Heart right ventricle (tissue), 16 donors: ENCODE measurements at regions of chr10 and their contacts with region 1.

Region 1: DNA sequence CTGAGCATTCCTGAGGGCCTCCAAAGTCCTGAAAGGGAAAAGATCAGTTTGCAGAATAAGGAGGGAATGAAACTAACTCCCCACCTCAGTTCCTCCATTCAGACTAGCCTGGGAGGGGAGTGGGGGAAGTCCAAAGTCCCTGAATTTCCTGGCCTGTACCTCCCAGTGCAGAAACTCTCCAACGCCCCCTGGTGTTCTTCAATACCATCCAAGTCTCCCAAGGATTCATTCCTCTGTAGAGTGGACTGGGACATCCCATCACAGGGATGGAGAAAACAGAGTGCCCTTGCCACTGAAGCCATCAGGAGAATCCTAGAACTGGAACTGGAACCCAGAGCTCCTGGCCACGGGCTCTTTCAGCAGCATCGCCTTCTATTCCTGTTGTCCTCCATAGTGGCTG is 1.6 kb upstream of the COL13A1 start:
- DNase-seq: peak in 1 of 2 donors; percentile 55
- ATAC-seq: peak in 5 of 8 donors; percentile 27 to 69 (median 55)
- H3K4me3 ChIP-seq: no peak overlapping the region
- H3K27ac ChIP-seq: no peak overlapping the region
- H3K4me1 ChIP-seq: peaks cover 2 to 30% (median 16%) of the 10 kb centered on the region in 9 donors
- H3K27me3 ChIP-seq: peaks cover 0 to 43% (median 7%) of the 10 kb centered on the region in 7 donors
- CTCF ChIP-seq: peak in 8 of 9 donors; percentile 44 to 76 (median 69)

Region 2: DNA sequence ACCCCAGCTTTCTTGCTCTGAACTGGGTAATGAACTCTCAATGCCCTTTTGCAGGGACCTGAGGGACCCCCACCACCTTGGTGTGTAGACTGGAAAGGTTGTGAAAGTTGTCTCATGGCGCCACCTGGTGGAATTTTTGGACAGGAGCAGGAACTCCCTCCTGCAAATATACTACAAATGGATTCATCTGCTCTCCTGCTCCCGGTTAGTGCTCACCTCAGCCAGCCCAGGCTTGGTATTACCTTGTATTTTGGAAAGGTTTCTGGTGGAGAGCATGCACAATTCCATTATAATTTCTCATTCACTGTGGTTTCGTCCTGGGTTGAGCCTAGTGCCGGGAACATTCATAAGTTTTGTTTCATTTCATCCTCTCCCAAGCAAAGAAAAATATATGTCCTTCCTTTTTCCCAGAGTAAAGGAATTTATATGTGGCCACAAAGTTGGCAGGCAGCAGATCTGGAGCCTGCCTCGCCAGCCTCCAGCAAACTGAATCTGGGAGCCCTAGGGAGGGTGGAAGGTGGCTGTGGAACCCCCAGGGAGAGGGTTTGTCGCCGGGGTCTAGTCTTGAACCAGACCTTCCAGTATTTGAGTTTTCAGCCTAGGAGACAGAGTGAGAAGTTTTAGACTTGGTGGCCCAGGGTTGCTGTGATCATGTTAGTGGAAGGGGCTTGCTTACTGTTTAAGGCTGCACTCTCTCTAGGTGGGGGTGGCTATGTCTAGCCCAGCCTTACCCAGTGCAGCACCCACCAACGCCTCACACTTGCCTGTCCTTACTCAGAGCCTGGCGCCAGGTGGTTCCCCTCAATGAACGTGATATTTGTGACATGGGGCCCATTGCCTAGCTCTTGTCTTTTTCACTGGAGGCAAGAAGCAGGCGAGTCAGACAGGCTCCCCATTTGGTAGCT is 160.6 kb before region 1 on chr10:
- intact Hi-C with region 1: loop called in 5 of 10 experiments (anchors 2 to 10 kb)
- DNase-seq: peak; percentile 36 to 64
- ATAC-seq: peak in 6 of 8 donors; percentile 32 to 75 (median 60)
- H3K4me3 ChIP-seq: no peak overlapping the region
- H3K27ac ChIP-seq: no peak overlapping the region
- H3K4me1 ChIP-seq: no peaks in the 10 kb centered on the region
- H3K27me3 ChIP-seq: peaks cover 0 to 37% (median 12%) of the 10 kb centered on the region in 7 donors
- CTCF ChIP-seq: peak; percentile 75 to 90 (median 87)

Region 3: DNA sequence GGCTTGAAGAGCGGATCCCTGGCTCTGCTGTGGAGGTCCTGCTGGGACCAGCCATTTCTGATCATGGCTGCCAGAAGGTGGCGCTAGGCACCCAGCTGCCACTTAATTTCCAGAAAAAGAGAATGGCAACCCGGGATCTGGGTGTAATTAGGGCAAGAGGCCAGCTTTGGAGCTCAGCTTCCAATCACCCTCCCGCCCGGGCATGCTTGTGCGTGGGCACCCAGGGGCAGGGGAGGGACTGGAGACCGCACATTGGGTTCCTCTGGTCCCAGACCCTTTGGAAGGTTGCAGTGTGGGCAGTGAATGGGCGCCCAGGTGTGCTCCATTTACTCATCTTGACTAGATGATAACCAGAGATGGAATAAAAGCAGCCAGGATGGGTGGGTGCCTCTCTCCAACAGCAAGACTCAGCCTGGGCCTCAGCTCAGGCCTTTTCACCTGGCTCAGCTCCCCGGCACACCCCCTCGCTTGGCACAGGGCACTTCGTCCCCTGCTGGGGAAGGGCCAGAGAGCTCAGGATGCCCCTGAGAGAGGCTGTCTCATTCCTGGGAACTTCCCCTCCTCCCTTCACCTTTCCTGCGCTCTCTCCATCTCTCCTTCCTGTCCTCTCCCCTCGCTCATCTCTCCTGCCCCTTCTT is 155.3 kb before region 1 on chr10:
- intact Hi-C with region 1: loop called in 7 of 10 experiments (anchors 2 to 10 kb)
- DNase-seq: peak; percentile 40 to 57
- ATAC-seq: peak in 6 of 8 donors; percentile 42 to 69 (median 58)
- H3K4me3 ChIP-seq: no peak overlapping the region
- H3K27ac ChIP-seq: no peak overlapping the region
- H3K4me1 ChIP-seq: no peaks in the 10 kb centered on the region
- H3K27me3 ChIP-seq: peaks cover 0 to 41% (median 12%) of the 10 kb centered on the region in 7 donors
- CTCF ChIP-seq: peak; percentile 62 to 90 (median 80)

Region 4: GRCh38 chr10:69696073-69696731 is 103.9 kb before region 1 on chr10:
- intact Hi-C with region 1: loop called in 6 of 10 experiments (anchors 1 to 10 kb)
- DNase-seq: peak in 1 of 2 donors; percentile 12
- ATAC-seq: peak in 6 of 8 donors; percentile 42 to 72 (median 60)
- H3K4me3 ChIP-seq: no peak overlapping the region
- H3K27ac ChIP-seq: no peak overlapping the region
- H3K4me1 ChIP-seq: peaks cover 0 to 5% (median 0%) of the 10 kb centered on the region in 9 donors
- H3K27me3 ChIP-seq: peaks cover 0 to 10% (median 3%) of the 10 kb centered on the region in 7 donors
- CTCF ChIP-seq: peak; percentile 21 to 73 (median 61)

Region 5: GRCh38 chr10:69716711-69717560 is 83.2 kb before region 1 on chr10:
- intact Hi-C with region 1: loop called in 1 of 10 experiments (anchors 5 kb)
- DNase-seq: peak in 1 of 2 donors; percentile 40
- ATAC-seq: peak in 7 of 8 donors; percentile 26 to 64 (median 54)
- H3K4me3 ChIP-seq: no peak overlapping the region
- H3K27ac ChIP-seq: no peak overlapping the region
- H3K4me1 ChIP-seq: peaks cover 0 to 17% (median 6%) of the 10 kb centered on the region in 9 donors
- H3K27me3 ChIP-seq: no peaks in the 10 kb centered on the region
- CTCF ChIP-seq: peak; percentile 27 to 72 (median 66)

Region 6: DNA sequence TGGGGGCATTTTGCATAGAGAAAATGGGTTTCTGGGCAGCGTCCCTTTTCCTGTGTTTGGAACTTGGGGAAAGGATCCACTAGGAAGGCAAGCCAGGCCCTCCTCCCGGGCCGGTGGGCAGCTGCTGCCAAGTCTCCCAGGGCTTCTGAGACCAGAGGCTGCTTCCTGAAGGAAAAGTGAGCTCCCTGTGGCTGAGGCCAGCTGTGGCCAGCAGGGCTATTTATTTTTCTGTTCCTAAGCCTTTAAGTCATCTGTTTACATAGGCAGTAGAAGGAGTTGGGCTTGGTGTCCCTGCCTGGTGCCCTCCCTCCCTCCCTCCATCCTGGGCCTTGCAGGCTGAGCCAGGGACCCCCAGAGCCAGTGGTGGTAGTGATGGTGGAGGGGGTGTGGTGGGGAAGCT is 68.9 kb before region 1 on chr10:
- intact Hi-C with region 1: loop called in 4 of 10 experiments (anchors 5 kb)
- DNase-seq: no peak
- ATAC-seq: peak in 4 of 8 donors; percentile 3 to 23 (median 17)
- H3K4me3 ChIP-seq: no peak overlapping the region
- H3K27ac ChIP-seq: peak overlapping the region in 8 of 10 donors; percentile 80 to 92 (median 83)
- H3K4me1 ChIP-seq: peaks cover 31 to 87% (median 55%) of the 10 kb centered on the region in 9 donors
- H3K27me3 ChIP-seq: no peaks in the 10 kb centered on the region
- CTCF ChIP-seq: no peak

Region 7: DNA sequence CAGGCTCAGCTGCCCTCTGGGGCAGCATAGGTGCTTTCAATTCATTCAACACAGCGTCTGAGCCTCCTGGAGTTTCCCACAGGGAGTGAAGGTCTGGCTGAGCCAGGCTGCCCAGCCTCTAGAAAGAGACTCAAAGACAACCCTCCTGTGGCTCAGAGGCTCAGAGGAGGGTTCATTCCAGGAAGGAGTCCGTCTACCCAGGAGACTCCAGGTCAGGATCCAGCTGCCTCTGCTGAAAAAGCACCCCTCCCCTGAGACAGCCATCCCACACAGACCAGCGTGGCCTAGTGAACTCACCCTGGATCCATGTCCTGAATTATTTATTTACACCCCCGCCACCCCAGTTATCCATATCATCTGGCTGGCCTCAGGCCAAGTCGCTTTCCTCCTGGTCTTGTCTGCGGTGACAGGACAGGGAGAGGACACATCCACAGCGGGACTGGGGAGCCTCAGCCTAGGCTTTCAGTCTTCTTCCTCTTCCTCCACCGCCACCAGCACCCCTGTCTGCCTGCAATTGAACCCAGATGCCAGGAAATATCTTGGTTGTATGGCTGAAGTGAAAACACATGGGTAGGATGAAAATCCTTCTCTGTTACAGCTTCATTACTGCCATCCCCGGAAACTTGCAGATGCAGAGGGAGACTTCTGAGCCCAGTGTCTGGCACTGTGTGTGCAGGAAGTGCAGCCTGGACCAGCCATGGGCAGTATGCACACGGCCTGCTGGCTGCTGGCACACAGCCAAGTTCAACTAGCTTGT is 42.4 kb before region 1 on chr10:
- intact Hi-C with region 1: loop called in 1 of 10 experiments (anchors 1 kb)
- DNase-seq: peak; percentile 24 to 50
- ATAC-seq: peak; percentile 47 to 82 (median 70)
- H3K4me3 ChIP-seq: no peak overlapping the region
- H3K27ac ChIP-seq: no peak overlapping the region
- H3K4me1 ChIP-seq: peaks cover 0 to 16% (median 8%) of the 10 kb centered on the region in 9 donors
- H3K27me3 ChIP-seq: peaks cover 0 to 6% (median 0%) of the 10 kb centered on the region in 7 donors
- CTCF ChIP-seq: no peak

Region 8: GRCh38 chr10:69819716-69820506 is 19.8 kb after region 1 on chr10:
- intact Hi-C with region 1: no loop called
- DNase-seq: no peak
- ATAC-seq: no peak
- H3K4me3 ChIP-seq: no peak overlapping the region
- H3K27ac ChIP-seq: no peak overlapping the region
- H3K4me1 ChIP-seq: peaks cover 0 to 13% (median 0%) of the 10 kb centered on the region in 9 donors
- H3K27me3 ChIP-seq: no peaks in the 10 kb centered on the region
- CTCF ChIP-seq: no peak

Region 9: GRCh38 chr10:69845574-69846292 is 45.6 kb after region 1 on chr10:
- intact Hi-C with region 1: no loop called
- DNase-seq: peak; percentile 49 to 61
- ATAC-seq: peak; percentile 66 to 96 (median 90)
- H3K4me3 ChIP-seq: no peak overlapping the region
- H3K27ac ChIP-seq: peak overlapping the region in 1 of 10 donors; percentile 29
- H3K4me1 ChIP-seq: peaks cover 0 to 16% (median 8%) of the 10 kb centered on the region in 9 donors
- H3K27me3 ChIP-seq: peaks cover 0 to 13% (median 0%) of the 10 kb centered on the region in 7 donors
- CTCF ChIP-seq: no peak